GM12878 (cell line): ENCODE measurements at regions of chr11 and their contacts with region 1.

Region 1: DNA sequence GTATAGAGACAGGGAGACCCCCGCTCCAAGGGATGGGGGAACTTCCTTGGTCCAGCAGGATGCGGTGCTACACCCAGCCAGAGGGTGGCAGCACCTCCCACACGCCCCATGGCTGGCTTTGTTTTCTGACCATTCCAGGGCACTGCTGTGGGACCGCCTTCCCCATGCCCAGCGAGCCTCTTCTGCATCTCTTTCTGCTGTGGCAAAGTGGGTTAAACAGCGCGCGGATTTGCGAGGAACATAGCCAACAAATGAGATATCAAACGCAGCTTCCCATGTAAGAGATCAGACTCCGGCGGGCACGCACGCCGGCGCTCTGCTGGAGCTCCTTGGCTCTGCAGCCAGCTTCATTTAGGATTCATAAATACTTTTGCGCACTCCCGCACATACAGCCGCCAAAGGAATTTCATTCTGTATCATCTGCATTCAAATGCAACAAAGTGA is 485.8 kb upstream of the CADM1 start:
- DNase-seq: no peak
- ATAC-seq: peak; percentile 91
- H3K4me3 ChIP-seq: no peak overlapping the region
- H3K27ac ChIP-seq: no peak overlapping the region
- H3K4me1 ChIP-seq: no peaks in the 10 kb centered on the region
- H3K27me3 ChIP-seq: no peaks in the 10 kb centered on the region
- CTCF ChIP-seq: peak; percentile 60 to 81 (median 62); a peak in 5 of 6 replicates
- EP300 ChIP-seq: no peak
- POLR2A ChIP-seq: no peak
- RAD21 ChIP-seq: peak; percentile 56

Region 2: DNA sequence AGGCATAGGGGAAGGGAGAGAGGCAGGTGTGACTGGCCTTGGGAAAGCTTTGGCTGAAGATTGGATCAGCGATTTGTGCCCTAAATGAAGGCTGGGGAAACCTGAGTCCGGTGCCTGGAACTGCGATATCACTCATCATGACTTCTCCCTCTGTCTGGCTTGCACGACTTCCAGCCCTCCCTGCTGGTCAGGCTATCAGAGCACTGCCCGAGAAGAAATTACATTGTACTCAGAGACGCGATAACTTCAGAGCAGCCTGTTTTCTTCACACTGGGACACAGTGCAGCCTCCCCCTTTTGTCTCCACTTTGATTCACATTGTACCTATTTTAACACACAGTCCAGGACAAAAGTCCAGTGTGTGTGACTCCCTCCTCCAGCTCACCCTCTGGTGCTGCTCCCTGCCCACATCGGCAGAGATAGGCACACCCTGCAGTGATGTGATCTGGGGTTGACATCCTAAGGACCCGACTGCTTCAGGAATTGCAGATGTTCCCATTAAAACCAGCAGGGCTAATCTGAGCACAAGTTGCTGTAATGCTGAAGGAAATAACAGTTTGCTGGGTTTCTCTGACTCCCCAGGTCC is 423.8 kb before region 1 on chr11:
- CTCF ChIA-PET with region 1: no interaction called
- POLR2A ChIA-PET with region 1: no interaction called
- RAD21 ChIA-PET with region 1: no interaction called
- SMC1A ChIA-PET with region 1: no interaction called
- in situ Hi-C with region 1: no loop called
- intact Hi-C with region 1: no loop called
- DNase-seq: no peak
- ATAC-seq: no peak
- H3K4me3 ChIP-seq: no peak overlapping the region
- H3K27ac ChIP-seq: no peak overlapping the region
- H3K4me1 ChIP-seq: no peaks in the 10 kb centered on the region
- H3K27me3 ChIP-seq: peaks cover 0 to 3% of the 10 kb centered on the region in 2 experiments; a peak in 2 of 4 replicates
- CTCF ChIP-seq: no peak
- EP300 ChIP-seq: no peak
- POLR2A ChIP-seq: no peak
- RAD21 ChIP-seq: no peak

Region 3: GRCh38 chr11:115941481-115941993 is 48.5 kb before region 1 on chr11:
- CTCF ChIA-PET with region 1: interaction called, 4 read pairs
- POLR2A ChIA-PET with region 1: no interaction called
- RAD21 ChIA-PET with region 1: interaction called, 4 read pairs
- SMC1A ChIA-PET with region 1: interaction called, 27 read pairs
- in situ Hi-C with region 1: no loop called
- intact Hi-C with region 1: no loop called
- DNase-seq: no peak
- ATAC-seq: no peak
- H3K4me3 ChIP-seq: no peak overlapping the region
- H3K27ac ChIP-seq: no peak overlapping the region
- H3K4me1 ChIP-seq: peaks cover 7% of the 10 kb centered on the region
- H3K27me3 ChIP-seq: no peaks in the 10 kb centered on the region
- CTCF ChIP-seq: no peak
- EP300 ChIP-seq: no peak
- POLR2A ChIP-seq: no peak
- RAD21 ChIP-seq: no peak

Region 4: GRCh38 chr11:115974703-115975102 is 15.3 kb before region 1 on chr11:
- CTCF ChIA-PET with region 1: interaction called, 10 read pairs
- POLR2A ChIA-PET with region 1: no interaction called
- RAD21 ChIA-PET with region 1: no interaction called
- SMC1A ChIA-PET with region 1: interaction called, 14 read pairs
- in situ Hi-C with region 1: no loop called
- intact Hi-C with region 1: no loop called
- DNase-seq: no peak
- ATAC-seq: peak; percentile 12
- H3K4me3 ChIP-seq: 0 out of 2 replicates have a peak overlapping the region, but pooled peaks have one; percentile 65
- H3K27ac ChIP-seq: no peak overlapping the region
- H3K4me1 ChIP-seq: peaks cover 4% of the 10 kb centered on the region; the same call in 1 of the 2 replicates
- H3K27me3 ChIP-seq: no peaks in the 10 kb centered on the region
- CTCF ChIP-seq: no peak
- EP300 ChIP-seq: no peak
- POLR2A ChIP-seq: no peak
- RAD21 ChIP-seq: no peak

Region 5: DNA sequence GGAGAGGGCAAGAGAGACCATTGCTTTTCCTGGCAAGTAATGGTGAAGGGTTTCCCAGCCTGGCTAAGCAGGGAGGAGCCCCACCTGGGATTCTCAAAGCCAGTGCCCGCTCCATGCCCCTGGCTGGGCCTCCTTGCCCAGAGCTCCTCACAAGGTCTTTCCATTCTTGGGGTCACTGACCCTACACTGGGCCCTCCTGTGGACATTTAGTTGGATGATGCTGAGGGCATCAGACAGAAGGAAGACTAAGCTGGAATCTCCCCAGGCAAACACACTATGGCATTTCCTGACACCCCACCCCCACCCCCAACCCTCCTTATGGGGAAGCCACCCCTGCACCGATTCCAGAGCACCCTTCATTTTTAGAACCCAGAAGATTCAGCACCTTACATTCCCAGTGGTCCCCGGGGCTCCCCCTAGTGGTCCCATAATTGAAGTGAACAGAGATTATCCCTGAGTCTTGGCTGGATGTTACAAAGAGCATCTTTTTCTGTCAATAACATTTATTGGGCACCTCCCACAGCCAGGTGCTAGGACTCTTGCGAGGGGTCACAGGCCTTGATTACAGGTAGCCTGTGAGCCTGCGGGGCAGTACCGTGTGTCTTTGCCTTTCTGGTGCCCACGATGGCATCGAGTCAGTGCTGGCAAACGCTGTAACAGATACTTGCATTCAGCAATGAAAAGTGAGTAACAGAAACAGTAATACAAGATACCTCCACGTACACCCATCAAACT is 234.3 kb after region 1 on chr11:
- CTCF ChIA-PET with region 1: interaction called, 4 read pairs
- POLR2A ChIA-PET with region 1: no interaction called
- RAD21 ChIA-PET with region 1: no interaction called
- SMC1A ChIA-PET with region 1: no interaction called
- in situ Hi-C with region 1: no loop called
- intact Hi-C with region 1: loop called (anchors 1 kb)
- DNase-seq: no peak
- ATAC-seq: peak; percentile 92
- H3K4me3 ChIP-seq: no peak overlapping the region
- H3K27ac ChIP-seq: no peak overlapping the region
- H3K4me1 ChIP-seq: no peaks in the 10 kb centered on the region
- H3K27me3 ChIP-seq: no peaks in the 10 kb centered on the region
- CTCF ChIP-seq: peak; percentile 70 to 78 (median 76)
- EP300 ChIP-seq: no peak
- POLR2A ChIP-seq: no peak
- RAD21 ChIP-seq: peak; percentile 81

Region 6: GRCh38 chr11:116276051-116277044 is 286.3 kb after region 1 on chr11:
- CTCF ChIA-PET with region 1: no interaction called
- POLR2A ChIA-PET with region 1: no interaction called
- RAD21 ChIA-PET with region 1: no interaction called
- SMC1A ChIA-PET with region 1: no interaction called
- in situ Hi-C with region 1: no loop called
- intact Hi-C with region 1: loop called (anchors 5 kb)
- DNase-seq: no peak
- ATAC-seq: peak; percentile 97
- H3K4me3 ChIP-seq: no peak overlapping the region
- H3K27ac ChIP-seq: no peak overlapping the region
- H3K4me1 ChIP-seq: no peaks in the 10 kb centered on the region
- H3K27me3 ChIP-seq: no peaks in the 10 kb centered on the region; a peak in 1 of 4 replicates
- CTCF ChIP-seq: peak; percentile 67 to 90 (median 87)
- EP300 ChIP-seq: no peak
- POLR2A ChIP-seq: no peak
- RAD21 ChIP-seq: peak; percentile 92